Dendritic cell treated with granulocyte-macrophage colony-stimulating factor and Interleukin-4, amounts not matched to agents 40 ng/mL and 50 ng/mL, for 4 days (primary cell): ENCODE measurements at regions of chr4 and their contacts with region 1.

Region 1: DNA sequence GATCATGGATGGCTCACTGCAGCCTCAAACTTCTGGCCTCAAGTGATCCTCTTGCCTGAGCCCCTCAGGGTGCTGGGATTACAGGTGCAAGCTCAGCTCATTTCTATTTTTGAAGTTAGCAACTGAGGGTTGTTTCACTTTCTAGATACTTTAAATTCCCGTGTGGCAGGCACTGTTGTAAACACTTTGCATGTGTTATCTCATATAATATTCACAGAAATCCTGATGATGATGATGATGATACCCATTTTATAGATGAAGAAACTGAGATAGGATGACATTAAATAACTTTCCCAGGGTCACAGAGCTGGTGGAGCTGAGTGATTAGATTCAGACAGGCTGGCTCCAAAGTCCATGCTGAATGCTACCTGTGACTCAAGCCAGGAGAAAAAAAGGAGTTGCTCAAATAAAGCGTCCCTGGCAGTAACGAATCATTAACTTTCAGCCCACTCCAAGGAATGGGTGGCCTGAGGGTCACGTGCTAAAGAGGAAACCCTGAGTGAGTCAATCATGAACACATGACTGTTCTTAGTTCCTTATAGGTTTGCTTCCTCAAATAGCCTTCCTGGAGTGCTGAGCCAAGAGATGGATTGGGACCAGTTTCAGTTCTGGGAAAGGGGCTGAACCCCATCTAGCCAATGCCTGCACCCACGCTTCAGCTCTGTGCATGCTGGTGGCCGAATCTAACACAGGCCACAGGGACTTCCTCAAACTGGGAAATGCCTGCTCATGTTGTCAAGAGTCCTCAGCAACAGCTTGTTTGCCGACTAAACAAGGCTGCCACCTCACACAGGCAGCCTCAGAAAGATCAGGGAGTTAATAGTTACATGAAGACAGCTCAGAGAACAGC is 52.8 kb downstream of the RBM47 start:
- H3K4me3 Mint-ChIP-seq: peak overlapping the region; percentile 48
- H3K27ac Mint-ChIP-seq: peak overlapping the region; percentile 98
- H3K4me1 Mint-ChIP-seq: peaks cover 80% of the 10 kb centered on the region
- H3K27me3 Mint-ChIP-seq: no peaks in the 10 kb centered on the region

Region 2: GRCh38 chr4:40149960-40150385 is 426.9 kb before region 1 on chr4:
- intact Hi-C with region 1: no loop called
- H3K4me3 Mint-ChIP-seq: no peak overlapping the region
- H3K27ac Mint-ChIP-seq: no peak overlapping the region
- H3K4me1 Mint-ChIP-seq: no peaks in the 10 kb centered on the region
- H3K27me3 Mint-ChIP-seq: no peaks in the 10 kb centered on the region

Region 3: GRCh38 chr4:40550948-40551462 is 25.9 kb before region 1 on chr4:
- intact Hi-C with region 1: loop called (anchors 2 kb)
- H3K4me3 Mint-ChIP-seq: peak overlapping the region; percentile 79
- H3K27ac Mint-ChIP-seq: peak overlapping the region; percentile 92
- H3K4me1 Mint-ChIP-seq: peaks cover 91% of the 10 kb centered on the region
- H3K27me3 Mint-ChIP-seq: no peaks in the 10 kb centered on the region

Region 4: DNA sequence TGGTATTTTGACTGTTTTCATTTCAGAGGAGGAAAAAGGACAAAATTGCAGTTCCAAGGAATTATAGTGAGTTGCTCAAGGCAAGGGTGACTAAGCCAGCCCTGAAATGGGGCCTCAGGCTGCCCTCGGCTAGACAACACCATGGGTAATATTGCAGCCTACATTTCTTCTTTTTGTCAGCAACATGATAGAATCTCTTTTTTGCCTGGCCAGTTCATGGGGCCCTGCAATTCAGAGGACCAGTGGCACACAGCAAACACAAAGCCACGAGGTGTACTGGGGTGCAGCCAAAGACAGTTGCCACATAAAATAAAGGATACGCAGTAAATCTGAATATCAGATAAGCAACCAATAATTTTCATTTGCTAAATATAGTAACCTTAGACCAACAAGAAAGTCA is 11.0 kb after region 1 on chr4:
- intact Hi-C with region 1: loop called (anchors 1 kb)
- H3K4me3 Mint-ChIP-seq: peak overlapping the region; percentile 44
- H3K27ac Mint-ChIP-seq: peak overlapping the region; percentile 95
- H3K4me1 Mint-ChIP-seq: peaks cover 81% of the 10 kb centered on the region
- H3K27me3 Mint-ChIP-seq: no peaks in the 10 kb centered on the region

Region 5: GRCh38 chr4:40601641-40602040 is 24.8 kb after region 1 on chr4:
- intact Hi-C with region 1: loop called (anchors 1 kb)
- H3K4me3 Mint-ChIP-seq: peak overlapping the region; percentile 2
- H3K27ac Mint-ChIP-seq: peak overlapping the region; percentile 88
- H3K4me1 Mint-ChIP-seq: peaks cover 60% of the 10 kb centered on the region
- H3K27me3 Mint-ChIP-seq: no peaks in the 10 kb centered on the region